Calu3 (cell line): ENCODE measurements at regions of chr3 and their contacts with region 1.

Region 1: GRCh38 chr3:157572559-157573270 is 69.5 kb upstream of the VEPH1 start:
- DNase-seq: peak; percentile 77
- H3K4me3 Mint-ChIP-seq: no peak overlapping the region
- H3K27ac Mint-ChIP-seq: peak overlapping the region; percentile 34
- H3K4me1 Mint-ChIP-seq: peaks cover 29% of the 10 kb centered on the region
- H3K27me3 Mint-ChIP-seq: no peaks in the 10 kb centered on the region
- CTCF ChIP-seq: peak; percentile 98

Region 2: GRCh38 chr3:157499342-157499963 is 73.3 kb before region 1 on chr3:
- CTCF ChIA-PET with region 1: interaction called, 11 read pairs
- intact Hi-C with region 1: no loop called
- DNase-seq: peak; percentile 93
- H3K4me3 Mint-ChIP-seq: peak overlapping the region; percentile 81
- H3K27ac Mint-ChIP-seq: peak overlapping the region; percentile 95
- H3K4me1 Mint-ChIP-seq: peaks cover 80% of the 10 kb centered on the region
- H3K27me3 Mint-ChIP-seq: no peaks in the 10 kb centered on the region
- CTCF ChIP-seq: no peak

Region 3: DNA sequence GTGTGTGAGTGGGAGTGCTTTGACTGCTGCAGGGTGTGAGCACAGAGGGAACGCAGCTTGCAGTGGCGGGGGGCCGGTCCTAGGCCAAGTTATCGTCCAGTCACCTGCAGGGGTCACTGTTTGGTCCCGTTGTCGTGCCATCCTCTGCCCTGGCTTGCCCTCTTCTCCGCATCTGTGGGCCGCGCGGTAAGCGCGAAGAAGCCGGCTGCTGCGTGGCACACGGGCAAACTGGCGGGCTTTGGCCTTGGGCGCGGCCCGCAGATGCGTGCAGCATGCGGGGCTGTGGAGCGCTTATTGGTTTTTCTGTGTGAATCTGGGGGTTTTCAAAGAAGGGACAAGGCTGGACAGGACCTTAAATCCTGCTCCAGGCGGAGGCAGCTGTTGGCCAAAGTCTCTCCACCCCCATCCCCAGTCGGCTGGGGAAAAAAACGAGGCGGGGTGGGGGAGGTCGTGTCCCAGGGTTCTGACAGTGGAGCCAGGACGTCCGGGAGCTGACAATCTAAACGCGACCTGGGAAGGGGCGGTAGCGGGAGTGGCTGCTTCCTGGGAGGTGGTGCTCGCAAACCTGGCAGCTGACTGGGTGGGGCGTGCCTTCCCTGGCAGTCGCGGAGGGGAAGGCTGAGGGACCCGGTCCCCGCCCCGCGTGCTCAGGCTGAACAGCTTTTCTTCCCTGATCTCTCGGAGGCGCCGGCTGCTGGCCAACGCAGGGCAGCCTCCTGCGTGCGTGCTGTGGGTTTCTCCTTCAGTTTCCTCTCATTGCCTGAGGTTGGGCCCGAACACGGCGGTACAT is 29.8 kb before region 1 on chr3:
- CTCF ChIA-PET with region 1: interaction called, 11 read pairs
- intact Hi-C with region 1: no loop called
- DNase-seq: peak; percentile 90
- H3K4me3 Mint-ChIP-seq: peak overlapping the region; percentile 82
- H3K27ac Mint-ChIP-seq: peak overlapping the region; percentile 39
- H3K4me1 Mint-ChIP-seq: peaks cover 12% of the 10 kb centered on the region
- H3K27me3 Mint-ChIP-seq: no peaks in the 10 kb centered on the region
- CTCF ChIP-seq: peak; percentile 24